PC-9 (cell line): ENCODE measurements at regions of chr15 and their contacts with region 1.

Region 1: GRCh38 chr15:62075595-62076282 is 9.0 kb downstream of the C2CD4A start:
- DNase-seq: peak; percentile 68 to 89
- H3K4me3 ChIP-seq: peak overlapping the region; percentile 47; the same call in 1 of the 2 replicates
- H3K27ac ChIP-seq: peak overlapping the region; percentile 50
- H3K4me1 ChIP-seq: peaks cover 23% of the 10 kb centered on the region
- H3K27me3 ChIP-seq: no peaks in the 10 kb centered on the region
- CTCF ChIP-seq: no peak

Region 2: DNA sequence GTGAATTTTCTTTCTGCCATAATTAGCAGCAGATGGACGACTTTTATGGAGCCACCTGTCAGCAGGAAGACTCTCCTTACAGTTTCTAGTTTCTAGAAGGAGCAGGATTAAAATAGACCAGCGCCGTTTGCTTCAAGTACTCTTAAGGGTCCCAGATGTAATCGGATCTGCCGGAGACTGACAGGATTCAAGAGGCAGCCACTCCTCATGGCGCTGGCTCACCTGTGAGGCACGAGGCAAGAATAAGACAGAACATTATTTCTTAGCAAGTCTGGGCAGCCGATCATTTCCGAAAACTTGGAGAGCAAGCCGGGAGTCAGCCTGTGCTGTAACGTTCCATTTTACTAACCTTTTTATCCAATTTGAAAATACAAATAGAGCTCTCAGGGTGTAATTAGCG is 436.2 kb before region 1 on chr15:
- CTCF ChIA-PET with region 1: no interaction called
- POLR2A ChIA-PET with region 1: no interaction called
- intact Hi-C with region 1: no loop called
- DNase-seq: no peak
- H3K4me3 ChIP-seq: no peak overlapping the region
- H3K27ac ChIP-seq: no peak overlapping the region
- H3K4me1 ChIP-seq: no peaks in the 10 kb centered on the region
- H3K27me3 ChIP-seq: peaks cover 38% of the 10 kb centered on the region
- CTCF ChIP-seq: no peak

Region 3: DNA sequence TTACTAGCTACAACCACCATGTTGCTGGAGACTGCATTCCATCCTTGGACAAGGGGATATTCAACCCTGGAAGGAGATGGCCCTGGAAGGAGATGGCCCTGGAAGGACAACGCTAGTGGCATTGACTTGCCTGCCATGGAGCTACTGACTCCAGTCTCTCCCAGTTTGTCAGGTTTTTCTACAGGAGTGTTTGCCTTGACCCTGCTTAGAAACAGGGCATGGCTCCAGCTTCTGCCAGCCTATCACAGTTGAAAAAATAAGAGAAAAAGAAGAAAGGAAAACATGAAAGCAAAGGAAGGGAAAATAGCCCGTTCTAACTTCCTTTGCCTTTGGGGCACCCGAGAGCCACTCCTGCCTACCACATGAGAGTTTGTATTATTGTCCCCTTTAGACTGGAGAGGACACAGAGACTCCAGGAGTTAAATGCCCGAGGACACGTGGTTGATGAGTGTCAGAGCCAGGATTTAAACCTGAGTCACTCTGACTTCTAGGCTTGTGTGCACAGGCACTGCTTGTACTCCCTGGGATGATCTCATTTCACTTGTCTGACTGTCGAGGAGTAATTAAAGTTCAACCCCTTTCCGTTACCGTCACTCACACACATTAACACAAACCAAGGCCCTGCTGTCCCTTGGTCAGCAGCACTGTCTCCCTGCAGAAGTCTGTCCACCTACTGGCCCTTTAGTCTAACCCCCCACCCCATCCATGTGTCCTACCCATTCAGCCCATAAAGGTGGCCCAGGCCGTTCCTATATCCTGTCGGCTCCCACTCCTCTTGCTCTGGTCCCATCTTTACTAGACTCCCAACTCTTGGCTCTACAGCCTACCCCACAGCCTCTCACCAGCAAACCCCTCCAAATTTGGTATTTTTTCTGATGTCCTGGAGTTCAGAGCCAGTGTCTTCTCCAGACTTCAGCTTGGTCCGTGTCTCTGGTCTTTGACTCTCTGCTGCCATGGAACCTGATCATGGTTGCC is 37.2 kb after region 1 on chr15:
- CTCF ChIA-PET with region 1: no interaction called
- POLR2A ChIA-PET with region 1: no interaction called
- intact Hi-C with region 1: loop called (anchors 2 kb)
- DNase-seq: peak; percentile 51 to 84
- H3K4me3 ChIP-seq: no peak overlapping the region
- H3K27ac ChIP-seq: peak overlapping the region; percentile 74
- H3K4me1 ChIP-seq: peaks cover 26% of the 10 kb centered on the region
- H3K27me3 ChIP-seq: no peaks in the 10 kb centered on the region
- CTCF ChIP-seq: no peak

Region 4: GRCh38 chr15:62138124-62138523 is 62.4 kb after region 1 on chr15:
- CTCF ChIA-PET with region 1: interaction called, 10 read pairs
- POLR2A ChIA-PET with region 1: no interaction called
- intact Hi-C with region 1: no loop called
- DNase-seq: no peak
- H3K4me3 ChIP-seq: no peak overlapping the region
- H3K27ac ChIP-seq: no peak overlapping the region
- H3K4me1 ChIP-seq: no peaks in the 10 kb centered on the region; the same call in 1 of the 2 replicates
- H3K27me3 ChIP-seq: no peaks in the 10 kb centered on the region
- CTCF ChIP-seq: no peak

Region 5: GRCh38 chr15:62758126-62758951 is 682.6 kb after region 1 on chr15:
- CTCF ChIA-PET with region 1: no interaction called
- POLR2A ChIA-PET with region 1: no interaction called
- intact Hi-C with region 1: no loop called
- DNase-seq: peak; percentile 34 to 78
- H3K4me3 ChIP-seq: peak overlapping the region; percentile 20; the same call in 1 of the 2 replicates
- H3K27ac ChIP-seq: peak overlapping the region; percentile 66
- H3K4me1 ChIP-seq: peaks cover 41% of the 10 kb centered on the region
- H3K27me3 ChIP-seq: no peaks in the 10 kb centered on the region
- CTCF ChIP-seq: no peak